ENCODE measurements at regions of chr12 and their contacts with region 1.

Region 1: GRCh38 chr12:122895705-122896636 is at the start of gene VPS37B:
- DNase-seq: peak; percentile 91 to 96 (median 93)
- H3K4me3 ChIP-seq: peak within 1 kb of the TSS; percentile 54 to 79
- H3K4me3 Mint-ChIP-seq: peak within 1 kb of the TSS; percentile 88 to 97 (median 92)
- H3K27ac ChIP-seq: peak within 1 kb of the TSS; percentile 86
- H3K27ac Mint-ChIP-seq: peak within 1 kb of the TSS; percentile 93 to 100 (median 100)
- H3K4me1 ChIP-seq: peaks cover 89% of the 10 kb centered on the region
- H3K4me1 Mint-ChIP-seq: peaks cover 60 to 92% (median 78%) of the 10 kb centered on the region in 4 donors
- H3K27me3 ChIP-seq: no peaks in the 10 kb centered on the region
- H3K27me3 Mint-ChIP-seq: no peaks in the 10 kb centered on the region
- total RNA-seq, gene VPS37B: 22.8 to 23.7 TPM

Region 2: GRCh38 chr12:122871851-122872780 is 23.9 kb before region 1 on chr12:
- CTCF ChIA-PET with region 1: interaction called, 28 read pairs
- POLR2A ChIA-PET with region 1: interaction called, 104 read pairs
- intact Hi-C with region 1: no loop called
- DNase-seq: peak in 3 of 5 donors; percentile 34 to 40 (median 39)
- H3K4me3 ChIP-seq: peak overlapping the region; percentile 25 to 41
- H3K4me3 Mint-ChIP-seq: peak overlapping the region; percentile 84 to 94 (median 91)
- H3K27ac ChIP-seq: peak overlapping the region; percentile 47
- H3K27ac Mint-ChIP-seq: peak overlapping the region; percentile 62 to 97 (median 94)
- H3K4me1 ChIP-seq: peaks cover 70% of the 10 kb centered on the region
- H3K4me1 Mint-ChIP-seq: peaks cover 48 to 82% (median 63%) of the 10 kb centered on the region in 4 donors
- H3K27me3 ChIP-seq: no peaks in the 10 kb centered on the region
- H3K27me3 Mint-ChIP-seq: no peaks in the 10 kb centered on the region

Region 3: GRCh38 chr12:122880668-122881067 is 15.3 kb before region 1 on chr12:
- CTCF ChIA-PET with region 1: interaction called, 15 read pairs
- POLR2A ChIA-PET with region 1: interaction called, 104 read pairs
- intact Hi-C with region 1: loop called (anchors 2 kb)
- DNase-seq: no peak
- H3K4me3 ChIP-seq: no peak overlapping the region
- H3K4me3 Mint-ChIP-seq: peak overlapping the region in 3 of 8 donors; percentile 11 to 27 (median 20)
- H3K27ac ChIP-seq: no peak overlapping the region
- H3K27ac Mint-ChIP-seq: peak overlapping the region; percentile 41 to 87 (median 80)
- H3K4me1 ChIP-seq: peaks cover 86% of the 10 kb centered on the region
- H3K4me1 Mint-ChIP-seq: peaks cover 51 to 94% (median 74%) of the 10 kb centered on the region in 4 donors
- H3K27me3 ChIP-seq: no peaks in the 10 kb centered on the region
- H3K27me3 Mint-ChIP-seq: no peaks in the 10 kb centered on the region

Region 4: DNA sequence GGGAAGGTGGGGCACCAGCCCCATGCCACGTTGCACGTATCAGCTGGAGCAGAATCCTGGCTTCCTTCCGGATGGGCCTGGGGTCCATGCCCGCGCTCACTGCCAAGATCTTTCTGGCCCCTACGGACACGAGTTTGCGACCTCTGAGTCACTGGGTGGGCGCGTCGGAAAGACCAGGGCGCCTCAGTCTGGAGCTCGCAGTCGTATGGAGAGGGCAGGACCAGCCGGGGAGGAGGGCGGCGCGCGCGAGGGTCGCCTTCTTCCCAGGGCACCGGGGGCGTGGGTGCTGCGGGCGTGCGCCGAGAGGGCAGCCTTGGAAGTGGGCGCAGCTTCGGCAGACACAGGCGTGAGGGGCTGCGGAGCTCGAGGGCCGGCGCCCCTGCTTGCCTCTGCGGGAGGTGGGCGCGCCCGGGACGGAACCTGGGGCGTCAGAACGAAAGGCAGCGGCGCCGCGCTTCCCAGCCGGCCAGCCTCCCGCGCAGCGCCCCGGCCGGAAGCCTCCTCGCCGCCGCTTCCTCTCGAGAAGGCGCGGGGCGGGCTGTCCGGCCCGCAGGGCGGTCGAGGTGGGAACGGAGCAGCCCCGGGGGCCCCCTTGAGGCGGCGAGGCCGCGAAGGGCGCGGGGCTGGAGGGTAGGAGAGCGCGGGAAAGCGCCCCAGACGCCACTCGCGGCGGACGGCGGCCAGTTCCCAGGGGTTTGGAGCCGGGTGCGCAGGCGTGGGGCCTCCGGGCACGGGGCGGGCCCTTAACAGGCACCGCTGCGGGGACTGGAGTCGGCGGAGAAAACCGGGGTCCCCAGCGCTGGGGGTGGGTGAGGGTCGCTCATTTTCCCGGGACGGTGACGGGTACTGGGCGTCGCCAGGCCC is 84.4 kb after region 1 on chr12 and contains the start of gene ARL6IP4:
- CTCF ChIA-PET with region 1: interaction called, 4 read pairs
- POLR2A ChIA-PET with region 1: interaction called, 31 read pairs
- intact Hi-C with region 1: loop called (anchors 2 kb)
- DNase-seq: peak; percentile 56 to 71 (median 64)
- H3K4me3 ChIP-seq: peak within 1 kb of the TSS; percentile 78 to 83
- H3K4me3 Mint-ChIP-seq: peak within 1 kb of the TSS; percentile 87 to 94 (median 90)
- H3K27ac ChIP-seq: peak within 1 kb of the TSS; percentile 68
- H3K27ac Mint-ChIP-seq: peak within 1 kb of the TSS; percentile 88 to 91 (median 90)
- H3K4me1 ChIP-seq: peaks cover 77% of the 10 kb centered on the region
- H3K4me1 Mint-ChIP-seq: peaks cover 18 to 72% (median 50%) of the 10 kb centered on the region in 4 donors
- H3K27me3 ChIP-seq: no peaks in the 10 kb centered on the region
- H3K27me3 Mint-ChIP-seq: no peaks in the 10 kb centered on the region
- total RNA-seq, gene ARL6IP4: 159 to 180 TPM

Region 5: GRCh38 chr12:123043536-123044001 is 147.6 kb after region 1 on chr12:
- CTCF ChIA-PET with region 1: no interaction called
- POLR2A ChIA-PET with region 1: no interaction called
- intact Hi-C with region 1: no loop called
- DNase-seq: peak; percentile 58 to 69 (median 69)
- H3K4me3 ChIP-seq: no peak overlapping the region
- H3K4me3 Mint-ChIP-seq: peak overlapping the region in 4 of 8 donors; percentile 15 to 64 (median 46)
- H3K27ac ChIP-seq: no peak overlapping the region
- H3K27ac Mint-ChIP-seq: peak overlapping the region in 6 of 7 donors; percentile 8 to 87 (median 73)
- H3K4me1 ChIP-seq: peaks cover 11% of the 10 kb centered on the region
- H3K4me1 Mint-ChIP-seq: peaks cover 9 to 27% (median 16%) of the 10 kb centered on the region in 4 donors
- H3K27me3 ChIP-seq: no peaks in the 10 kb centered on the region
- H3K27me3 Mint-ChIP-seq: no peaks in the 10 kb centered on the region

Measured in CD4-positive, alpha-beta memory T cell (primary cell).